ENCODE measurements at regions of chr9 and their contacts with region 1.

Region 1: DNA sequence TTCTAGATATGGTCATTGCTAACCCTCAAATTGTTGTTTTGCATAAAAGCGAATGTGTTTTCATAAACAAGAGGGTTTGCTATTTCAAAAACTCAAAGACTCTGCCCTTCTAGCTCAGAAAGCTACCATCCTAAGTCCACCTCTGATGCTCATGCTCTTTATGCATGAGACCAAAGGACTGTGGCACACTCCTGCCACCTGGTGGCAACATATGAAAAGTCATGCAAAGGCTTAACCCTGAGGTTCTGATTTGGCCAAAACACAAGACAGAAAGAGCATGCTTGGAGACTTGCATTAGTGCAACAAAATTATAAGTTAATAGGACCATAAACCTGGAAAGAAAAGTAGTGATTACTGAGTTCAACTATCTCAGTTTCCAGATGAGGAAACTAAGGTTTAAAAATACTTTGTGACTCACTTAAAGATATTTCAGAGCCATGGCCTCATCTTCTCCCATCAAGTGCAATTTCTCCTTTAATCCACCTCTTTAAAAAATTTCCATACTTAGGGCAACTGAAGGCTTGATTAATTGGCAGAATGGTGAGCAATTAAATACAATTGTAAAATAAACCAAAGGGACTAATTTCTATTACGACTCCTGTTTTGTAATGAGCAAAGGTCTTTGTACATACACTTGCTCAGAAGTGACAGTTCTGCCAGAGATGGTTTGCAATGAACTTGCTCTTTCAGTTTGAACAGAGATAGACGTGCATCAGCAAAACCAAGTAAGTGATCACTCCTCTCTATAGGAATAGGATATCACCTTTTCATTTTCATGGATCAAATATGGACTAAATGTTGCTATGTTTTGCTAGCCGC is 110.7 kb upstream of the RAD23B start:
- DNase-seq: peak; percentile 67
- ATAC-seq: peak; percentile 97
- H3K4me3 ChIP-seq: no peak overlapping the region
- H3K27ac ChIP-seq: no peak overlapping the region
- H3K4me1 ChIP-seq: no peaks in the 10 kb centered on the region
- H3K27me3 ChIP-seq: no peaks in the 10 kb centered on the region; a peak in 1 of 5 replicates
- CTCF ChIP-seq: peak; percentile 88
- EP300 ChIP-seq: no peak
- POLR2A ChIP-seq: no peak
- RAD21 ChIP-seq: peak; percentile 66

Region 2: GRCh38 chr9:105842023-105842644 is 1330.2 kb before region 1 on chr9:
- CTCF ChIA-PET with region 1: interaction called, 3 read pairs
- POLR2A ChIA-PET with region 1: no interaction called
- in situ Hi-C with region 1: no loop called
- intact Hi-C with region 1: loop called (anchors 1 kb)
- DNase-seq: peak; percentile 16
- ATAC-seq: no peak
- H3K4me3 ChIP-seq: no peak overlapping the region
- H3K27ac ChIP-seq: no peak overlapping the region
- H3K4me1 ChIP-seq: no peaks in the 10 kb centered on the region
- H3K27me3 ChIP-seq: no peaks in the 10 kb centered on the region
- CTCF ChIP-seq: peak; percentile 70
- EP300 ChIP-seq: no peak
- POLR2A ChIP-seq: no peak
- RAD21 ChIP-seq: no peak

Region 3: GRCh38 chr9:105901514-105902109 is 1270.8 kb before region 1 on chr9:
- CTCF ChIA-PET with region 1: interaction called, 3 read pairs
- POLR2A ChIA-PET with region 1: no interaction called
- in situ Hi-C with region 1: loop called (anchors 25 kb)
- intact Hi-C with region 1: no loop called
- DNase-seq: peak; percentile 25
- ATAC-seq: peak; percentile 100
- H3K4me3 ChIP-seq: no peak overlapping the region
- H3K27ac ChIP-seq: no peak overlapping the region
- H3K4me1 ChIP-seq: no peaks in the 10 kb centered on the region
- H3K27me3 ChIP-seq: no peaks in the 10 kb centered on the region
- CTCF ChIP-seq: peak; percentile 92
- EP300 ChIP-seq: no peak
- POLR2A ChIP-seq: no peak
- RAD21 ChIP-seq: peak; percentile 74

Region 4: DNA sequence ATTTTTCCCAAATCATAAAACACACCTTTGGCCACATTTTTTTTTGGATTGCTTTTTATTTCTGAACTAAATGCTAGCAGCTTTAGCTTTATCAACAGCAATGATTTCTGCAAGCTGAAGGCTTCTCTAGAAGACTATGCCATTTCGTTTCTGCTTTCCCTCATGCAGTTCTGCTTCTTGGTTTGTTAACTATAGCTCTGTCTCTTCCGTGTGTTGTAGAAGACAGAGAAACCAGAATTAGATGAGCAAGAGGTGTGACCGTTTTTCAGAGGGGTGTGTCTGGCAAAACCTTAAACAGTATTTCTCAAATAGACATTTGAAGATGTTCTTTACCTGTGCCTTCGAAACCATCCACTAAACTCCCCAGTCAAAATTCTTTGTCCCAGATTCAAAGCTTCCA is 177.9 kb before region 1 on chr9:
- CTCF ChIA-PET with region 1: no interaction called
- POLR2A ChIA-PET with region 1: no interaction called
- in situ Hi-C with region 1: no loop called
- intact Hi-C with region 1: no loop called
- DNase-seq: no peak
- ATAC-seq: no peak
- H3K4me3 ChIP-seq: no peak overlapping the region
- H3K27ac ChIP-seq: no peak overlapping the region
- H3K4me1 ChIP-seq: no peaks in the 10 kb centered on the region
- H3K27me3 ChIP-seq: no peaks in the 10 kb centered on the region
- CTCF ChIP-seq: no peak
- EP300 ChIP-seq: no peak
- POLR2A ChIP-seq: no peak
- RAD21 ChIP-seq: no peak

Region 5: GRCh38 chr9:107137495-107138202 is 34.7 kb before region 1 on chr9:
- CTCF ChIA-PET with region 1: interaction called, 12 read pairs
- POLR2A ChIA-PET with region 1: no interaction called
- in situ Hi-C with region 1: no loop called
- intact Hi-C with region 1: loop called (anchors 1 kb)
- DNase-seq: peak; percentile 21
- ATAC-seq: peak; percentile 69
- H3K4me3 ChIP-seq: no peak overlapping the region
- H3K27ac ChIP-seq: no peak overlapping the region
- H3K4me1 ChIP-seq: no peaks in the 10 kb centered on the region
- H3K27me3 ChIP-seq: peaks cover 2 to 3% of the 10 kb centered on the region in 2 experiments; a peak in 2 of 5 replicates
- CTCF ChIP-seq: peak; percentile 74
- EP300 ChIP-seq: no peak
- POLR2A ChIP-seq: no peak
- RAD21 ChIP-seq: peak; percentile 48; the same call in 1 of the 2 replicates

Region 6: DNA sequence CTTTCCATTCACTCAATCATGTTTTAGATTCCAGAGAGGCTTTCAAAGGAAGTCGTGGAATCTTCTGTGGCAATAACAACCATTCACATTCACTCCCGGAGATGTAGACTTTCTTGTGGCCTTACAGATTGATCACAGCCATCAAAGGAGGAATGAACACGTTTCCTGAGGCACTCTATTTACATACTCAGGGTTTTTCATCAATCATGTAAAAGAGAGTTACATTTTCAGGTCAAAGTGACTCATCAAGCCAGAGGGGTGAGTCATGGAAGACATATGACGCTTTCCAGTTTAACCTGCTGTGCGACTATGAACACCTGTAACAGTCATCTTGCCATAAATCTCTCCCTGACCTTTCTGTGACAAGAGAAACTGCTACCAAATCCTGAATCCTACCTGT is 71.4 kb after region 1 on chr9:
- CTCF ChIA-PET with region 1: no interaction called
- POLR2A ChIA-PET with region 1: no interaction called
- in situ Hi-C with region 1: no loop called
- intact Hi-C with region 1: no loop called
- DNase-seq: peak; percentile 89
- ATAC-seq: peak; percentile 74
- H3K4me3 ChIP-seq: no peak overlapping the region
- H3K27ac ChIP-seq: peak overlapping the region; percentile 24
- H3K4me1 ChIP-seq: peaks cover 39% of the 10 kb centered on the region
- H3K27me3 ChIP-seq: no peaks in the 10 kb centered on the region; a peak in 1 of 5 replicates
- CTCF ChIP-seq: no peak
- EP300 ChIP-seq: peak; percentile 23 to 82; a peak in 3 of 4 replicates
- POLR2A ChIP-seq: no peak
- RAD21 ChIP-seq: no peak

Measured in HepG2 (cell line).